ENCODE measurements at regions of chr2 and their contacts with region 1.

Region 1: DNA sequence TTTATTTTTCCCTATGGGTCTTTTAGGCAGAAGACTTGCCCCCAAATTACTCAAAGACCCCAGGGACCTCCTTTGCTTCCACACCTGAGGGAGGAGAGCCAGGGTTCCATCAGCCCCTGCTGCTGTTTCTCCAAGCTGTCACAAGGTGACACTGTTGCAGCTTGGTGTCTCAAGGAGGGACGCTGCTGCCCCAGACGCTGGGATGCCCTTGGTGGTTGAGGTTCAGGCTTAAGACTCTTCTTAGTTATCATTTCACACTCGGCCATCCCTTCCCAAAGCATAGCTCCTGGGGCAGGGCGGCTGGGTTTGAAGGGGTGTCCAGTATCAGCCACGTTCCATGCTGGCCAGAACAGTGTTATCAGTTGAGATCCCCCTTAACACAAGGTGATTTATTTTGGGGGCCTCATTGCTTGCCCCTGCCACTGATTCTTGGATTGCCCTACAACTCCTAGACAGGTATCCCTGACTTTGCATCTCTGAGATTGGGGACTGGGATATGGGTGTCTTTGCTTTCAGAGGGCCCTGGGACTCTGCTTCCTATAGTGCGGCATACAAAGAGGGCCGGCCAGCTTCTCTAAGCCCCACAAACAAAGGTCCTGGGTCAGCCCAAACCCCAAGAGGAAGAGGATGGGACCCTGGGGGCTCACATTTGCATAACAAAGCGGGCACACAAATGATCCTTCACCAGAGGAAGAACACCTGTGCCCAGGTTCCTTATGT is 22.7 kb downstream of the GPR55 start:
- DNase-seq: no peak
- ATAC-seq: no peak

Region 2: DNA sequence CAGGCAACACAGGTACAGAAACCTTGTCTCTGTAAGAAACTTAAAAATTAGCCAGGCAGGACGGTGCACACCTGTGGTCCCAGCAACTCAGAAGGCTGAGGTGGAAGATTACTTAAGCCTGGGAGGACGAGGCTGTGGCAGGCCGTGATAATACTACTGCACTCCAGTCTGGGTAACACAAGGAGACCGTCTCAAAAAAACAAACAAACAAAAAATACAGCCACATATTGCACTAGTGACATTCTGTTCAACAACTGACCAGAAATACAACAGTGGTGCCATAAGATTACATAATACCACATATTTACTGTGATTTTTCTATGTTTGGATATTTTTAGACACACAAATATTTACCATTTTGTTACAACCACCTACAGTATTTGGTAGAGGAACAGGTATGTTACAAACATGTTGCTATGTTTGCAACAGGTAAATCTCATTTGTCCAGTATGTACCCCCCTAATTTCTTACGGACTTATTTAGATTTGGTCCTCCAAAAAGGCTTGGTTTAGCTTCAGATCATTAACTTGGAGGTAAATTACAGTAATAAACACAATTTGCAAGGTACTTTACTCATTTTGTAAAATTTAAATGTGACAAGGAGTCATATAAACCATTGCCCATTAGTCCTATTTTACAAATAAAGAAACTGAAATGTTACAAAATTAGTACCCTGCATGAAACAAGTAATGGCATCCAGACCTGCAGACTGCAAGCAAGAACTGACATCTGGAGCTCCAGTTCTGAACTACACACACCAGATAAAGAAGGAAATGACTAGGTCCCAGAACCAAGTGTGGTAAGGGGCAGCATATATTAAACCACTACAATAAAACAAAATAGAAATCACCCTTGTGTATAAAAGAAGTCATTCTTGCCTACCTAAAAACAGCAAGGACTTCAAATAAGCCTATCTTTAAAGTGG is 1017.3 kb before region 1 on chr2:
- intact Hi-C with region 1: no loop called
- DNase-seq: no peak
- ATAC-seq: no peak

Region 3: GRCh38 chr2:230866756-230867523 is 35.4 kb before region 1 on chr2:
- intact Hi-C with region 1: no loop called
- DNase-seq: no peak
- ATAC-seq: no peak

Region 4: DNA sequence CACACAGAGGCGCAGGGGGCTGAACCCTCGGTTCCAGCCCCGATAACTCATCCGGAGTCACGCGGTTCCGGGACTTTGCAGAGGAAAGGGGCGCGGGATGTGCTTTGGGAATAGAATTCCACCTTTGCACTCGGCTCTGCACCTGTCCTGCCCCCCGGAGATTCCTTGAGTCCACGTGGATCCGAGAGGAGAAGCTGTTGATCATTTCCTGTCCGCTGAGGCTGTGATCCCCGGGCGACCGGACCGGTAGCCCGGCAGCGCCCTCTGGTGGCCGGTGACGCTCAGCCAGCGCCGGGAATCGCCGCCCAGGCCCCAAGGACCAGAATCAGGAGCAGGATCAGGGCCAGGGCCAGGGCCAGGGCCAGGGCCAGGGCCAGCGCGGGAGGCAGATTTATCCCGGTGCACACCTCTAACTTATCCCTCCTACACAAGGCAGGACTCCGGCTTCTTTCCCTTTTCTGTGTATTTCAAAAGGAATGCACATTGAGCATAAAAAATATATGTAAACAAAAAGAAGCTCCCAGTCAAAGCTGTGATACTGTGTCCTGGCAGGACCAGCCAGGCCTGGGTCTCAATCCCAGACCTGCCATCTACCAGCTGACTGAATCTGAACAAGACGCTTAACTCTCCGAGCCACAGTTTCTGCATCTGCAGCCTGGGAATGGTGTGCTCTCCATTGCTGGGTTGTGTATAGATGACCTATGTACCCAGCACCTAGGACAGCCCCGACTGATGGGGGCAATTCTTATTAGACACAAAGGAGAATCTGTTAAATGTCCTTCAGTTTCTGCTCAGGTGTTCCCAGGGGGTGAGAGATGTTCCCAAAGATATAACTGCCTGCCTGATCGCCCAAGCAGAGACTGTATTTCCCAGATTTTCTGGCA is 85.0 kb after region 1 on chr2:
- intact Hi-C with region 1: loop called (anchors 1 kb)
- DNase-seq: peak; percentile 93
- ATAC-seq: peak; percentile 82

Region 5: DNA sequence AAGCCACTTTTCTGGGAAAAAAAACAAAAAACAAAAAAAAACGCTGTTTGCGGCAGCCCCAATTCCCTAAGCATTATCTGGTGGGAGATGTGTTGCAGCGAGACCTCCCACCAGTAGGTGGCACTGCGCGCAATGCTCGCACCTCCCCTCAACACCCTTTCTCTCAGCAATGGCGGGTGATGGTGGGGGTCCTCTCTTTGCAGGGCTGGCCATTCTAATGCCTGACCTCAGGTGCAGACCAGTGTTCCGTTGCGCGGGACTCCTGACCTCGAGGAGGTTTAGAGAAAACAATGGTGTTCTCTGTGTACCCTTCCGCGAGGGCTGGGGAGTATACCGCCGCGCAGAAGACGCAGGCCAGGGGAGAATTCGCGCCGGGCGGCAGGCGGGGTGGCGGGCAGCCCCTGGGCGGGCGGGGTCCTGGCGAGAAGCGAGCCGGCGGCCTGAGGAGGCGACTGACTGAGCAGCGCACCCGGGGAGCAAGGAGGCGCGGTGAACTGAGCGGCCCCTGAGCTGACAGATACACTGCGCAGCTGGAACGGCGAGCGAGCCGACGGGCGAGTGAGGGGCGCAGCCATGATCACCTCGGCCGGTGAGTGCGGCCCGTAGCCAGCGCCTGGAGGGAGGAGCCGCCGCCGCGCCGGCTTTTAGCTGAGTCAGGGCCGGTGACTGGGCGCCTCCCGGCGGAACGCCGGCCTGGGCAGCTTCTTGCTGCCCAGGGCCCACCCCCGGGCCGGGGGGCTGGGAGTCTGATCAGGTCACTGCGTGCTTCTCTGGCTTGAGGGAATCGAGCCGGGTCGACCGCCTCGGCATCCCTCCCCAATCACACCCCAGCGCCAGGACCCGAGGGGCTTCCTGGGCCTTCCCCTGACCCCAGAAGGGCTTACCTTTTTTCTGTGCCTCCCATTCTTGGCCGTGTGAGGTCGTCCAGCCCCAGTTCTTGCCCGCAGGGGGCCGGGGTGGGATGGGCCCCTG is 154.4 kb after region 1 on chr2 and contains the start of gene PSMD1:
- intact Hi-C with region 1: loop called (anchors 5 kb)
- DNase-seq: peak; percentile 95
- ATAC-seq: peak; percentile 93
- total RNA-seq, gene PSMD1: 86.3 TPM

Region 6: DNA sequence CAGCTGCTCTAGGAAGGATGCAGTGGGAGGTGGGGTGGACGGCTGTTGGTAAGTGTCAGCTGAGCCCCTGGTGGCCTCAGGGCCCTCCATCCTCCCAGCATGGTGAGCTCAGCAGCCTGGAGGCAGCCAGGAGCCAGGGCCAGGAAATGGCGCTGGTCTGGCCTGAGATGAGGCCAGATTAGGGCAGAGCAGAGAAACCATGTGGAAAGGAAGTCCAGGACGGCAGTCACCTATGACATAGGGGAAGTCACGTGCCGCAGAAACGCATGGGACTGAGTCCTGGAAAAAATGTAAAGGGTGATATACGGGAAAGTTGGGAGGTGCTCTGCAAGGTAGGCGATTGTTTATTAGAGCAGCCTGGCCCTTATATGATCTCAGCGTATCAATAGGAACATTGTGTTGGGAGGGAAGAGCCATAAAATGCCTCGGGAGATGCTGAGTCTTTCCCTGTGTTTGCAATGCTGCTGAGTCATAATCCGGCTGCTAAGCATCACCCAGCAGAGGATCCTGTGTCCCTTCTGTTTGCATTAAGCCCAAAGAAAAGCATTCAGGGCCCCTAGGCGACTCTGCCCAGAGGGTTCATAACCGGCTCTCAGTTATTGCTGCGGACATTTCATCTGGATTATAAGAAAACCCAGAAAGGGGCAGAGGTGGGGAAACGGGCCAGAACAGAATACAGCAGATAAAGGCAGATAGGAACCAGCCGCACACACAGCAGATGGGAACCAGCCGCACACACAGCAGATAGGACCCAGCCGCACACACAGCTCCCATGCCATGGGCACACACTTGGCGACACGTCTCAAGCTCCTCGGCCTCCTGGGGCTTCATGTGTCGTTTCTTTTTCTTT is 462.8 kb after region 1 on chr2:
- intact Hi-C with region 1: no loop called
- DNase-seq: peak; percentile 6
- ATAC-seq: no peak